ENCODE measurements at regions of chr2 and their contacts with region 1.

Region 1: GRCh38 chr2:228180181-228181097 is 1.0 kb downstream of the SPHKAP start:
- DNase-seq: peak; percentile 38 to 62 (median 48)
- ATAC-seq: peak; percentile 56 to 75 (median 68)
- H3K4me3 ChIP-seq: peak overlapping the region; percentile 40 to 69 (median 60)
- H3K27ac ChIP-seq: peak overlapping the region; percentile 1 to 88 (median 80)
- H3K4me1 ChIP-seq: peaks cover 0 to 5% (median 0%) of the 10 kb centered on the region in 12 donors
- H3K27me3 ChIP-seq: peaks cover 0 to 17% (median 0%) of the 10 kb centered on the region in 9 donors
- CTCF ChIP-seq: peak in 3 of 12 donors; percentile 10 to 23 (median 15)
- POLR2A ChIP-seq: no peak

Region 2: DNA sequence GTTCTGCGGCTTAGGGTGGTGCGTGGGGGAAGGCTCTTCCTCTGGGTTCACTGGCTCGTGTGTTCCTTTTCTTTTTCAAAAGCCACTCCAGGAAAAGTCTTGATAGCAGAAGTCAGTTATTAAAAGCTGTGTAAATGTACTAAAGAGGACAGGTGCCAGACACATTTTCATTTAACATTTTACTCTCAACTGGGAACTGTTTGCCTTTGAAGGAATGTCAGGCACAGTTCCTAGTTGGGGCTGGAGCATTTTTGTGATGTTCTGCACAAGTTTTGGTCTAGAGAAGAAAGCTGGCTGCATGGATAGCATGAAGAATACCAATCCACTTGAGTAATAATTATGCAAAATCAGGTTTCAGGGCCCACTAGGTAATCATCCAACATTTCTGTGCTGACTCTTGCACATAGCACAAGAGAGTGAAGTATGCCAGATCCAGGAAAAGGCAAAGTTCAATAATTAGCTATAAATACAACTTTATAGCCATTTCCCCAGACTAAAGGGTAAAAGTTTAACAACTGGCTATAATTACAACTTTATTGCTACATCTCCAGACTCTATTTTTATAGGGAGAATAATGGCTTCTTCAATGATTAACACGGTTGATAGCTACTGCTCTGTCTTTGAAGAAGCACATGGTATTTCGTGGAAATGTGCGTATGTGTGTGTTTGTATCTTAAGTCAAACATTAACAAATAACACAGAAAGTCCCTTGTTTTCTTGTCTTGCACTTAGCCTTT is 418.5 kb before region 1 on chr2:
- intact Hi-C with region 1: no loop called
- DNase-seq: no peak
- ATAC-seq: no peak
- H3K4me3 ChIP-seq: no peak overlapping the region
- H3K27ac ChIP-seq: no peak overlapping the region
- H3K4me1 ChIP-seq: peaks cover 0 to 10% (median 5%) of the 10 kb centered on the region in 12 donors
- H3K27me3 ChIP-seq: peaks cover 0 to 10% (median 0%) of the 10 kb centered on the region in 9 donors
- CTCF ChIP-seq: no peak
- POLR2A ChIP-seq: no peak

Region 3: DNA sequence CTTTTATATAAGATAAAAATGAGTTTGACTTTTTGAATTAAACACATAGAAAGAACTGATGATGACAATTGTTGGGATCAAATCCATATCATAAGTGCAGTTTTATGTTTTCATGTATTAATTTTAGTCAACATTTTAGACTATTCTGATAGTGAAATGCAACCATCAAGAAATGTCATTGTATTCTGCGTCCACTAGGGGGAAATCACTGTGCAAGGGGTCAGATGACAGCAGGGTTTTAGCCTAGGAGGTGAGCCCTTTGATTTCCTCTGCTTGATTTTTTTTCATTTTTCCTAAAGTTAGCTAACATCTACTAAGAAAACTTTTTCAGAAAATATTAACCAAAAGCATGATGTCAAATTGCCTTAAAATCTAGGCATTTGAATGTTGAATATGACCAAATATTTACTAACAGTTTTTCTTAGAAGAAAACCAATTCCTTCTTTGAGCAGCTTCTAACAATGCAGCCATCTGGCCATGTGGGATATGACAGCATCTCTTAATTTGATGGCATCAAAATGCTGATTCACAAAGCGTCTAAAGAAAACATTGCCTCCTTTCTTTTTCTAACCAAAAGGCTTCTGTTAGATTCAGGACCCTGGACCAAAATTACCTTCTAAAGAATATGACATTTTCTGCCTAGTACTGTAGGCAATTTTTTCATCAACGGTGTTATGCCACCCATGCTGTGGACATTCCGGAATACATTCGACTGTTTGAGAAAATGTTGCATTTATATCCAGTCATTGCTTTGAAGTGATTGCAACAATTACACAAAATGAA is 140.5 kb before region 1 on chr2:
- intact Hi-C with region 1: loop called in 2 of 10 experiments (anchors 5 kb)
- DNase-seq: no peak
- ATAC-seq: no peak
- H3K4me3 ChIP-seq: no peak overlapping the region
- H3K27ac ChIP-seq: no peak overlapping the region
- H3K4me1 ChIP-seq: no peaks in the 10 kb centered on the region
- H3K27me3 ChIP-seq: no peaks in the 10 kb centered on the region
- CTCF ChIP-seq: peak in 11 of 12 donors; percentile 33 to 62 (median 50)
- POLR2A ChIP-seq: no peak

Region 4: GRCh38 chr2:228048838-228049490 is 131.5 kb before region 1 on chr2:
- intact Hi-C with region 1: loop called in 3 of 10 experiments (anchors 5 kb)
- DNase-seq: peak in 2 of 5 donors; percentile 9 to 30
- ATAC-seq: peak; percentile 87 to 96 (median 90)
- H3K4me3 ChIP-seq: no peak overlapping the region
- H3K27ac ChIP-seq: peak overlapping the region in 1 of 12 donors; percentile 14
- H3K4me1 ChIP-seq: peaks cover 0 to 11% (median 0%) of the 10 kb centered on the region in 12 donors
- H3K27me3 ChIP-seq: no peaks in the 10 kb centered on the region
- CTCF ChIP-seq: peak; percentile 19 to 64 (median 48)
- POLR2A ChIP-seq: no peak

Region 5: DNA sequence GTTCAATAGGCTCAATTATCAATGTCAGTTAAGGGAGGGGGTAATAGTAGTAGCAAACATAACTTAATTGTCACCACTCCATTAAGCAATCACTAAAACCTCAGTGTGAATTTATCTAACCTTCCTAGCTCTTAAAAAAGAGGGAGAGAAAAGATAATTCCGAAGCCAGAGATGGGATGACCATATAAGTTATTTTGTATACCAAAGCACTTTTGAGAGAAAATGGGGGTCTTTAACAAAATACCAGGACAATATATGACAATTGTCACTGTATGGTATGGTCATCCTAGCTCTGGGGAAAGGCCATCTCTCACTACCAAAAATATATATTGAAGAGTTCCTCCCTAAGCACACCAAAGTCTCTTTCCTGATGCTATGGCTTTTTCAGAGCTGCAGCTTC is 54.0 kb before region 1 on chr2:
- intact Hi-C with region 1: no loop called
- DNase-seq: no peak
- ATAC-seq: no peak
- H3K4me3 ChIP-seq: no peak overlapping the region
- H3K27ac ChIP-seq: no peak overlapping the region
- H3K4me1 ChIP-seq: peaks cover 0 to 4% (median 0%) of the 10 kb centered on the region in 12 donors
- H3K27me3 ChIP-seq: no peaks in the 10 kb centered on the region
- CTCF ChIP-seq: no peak
- POLR2A ChIP-seq: no peak

Region 6: GRCh38 chr2:228318218-228318617 is 137.8 kb after region 1 on chr2:
- intact Hi-C with region 1: loop called in 1 of 10 experiments (anchors 5 kb)
- DNase-seq: peak in 4 of 5 donors; percentile 16 to 48 (median 32)
- ATAC-seq: peak; percentile 61 to 88 (median 80)
- H3K4me3 ChIP-seq: no peak overlapping the region
- H3K27ac ChIP-seq: peak overlapping the region in 1 of 12 donors; percentile 43
- H3K4me1 ChIP-seq: peaks cover 0 to 19% (median 9%) of the 10 kb centered on the region in 12 donors
- H3K27me3 ChIP-seq: no peaks in the 10 kb centered on the region
- CTCF ChIP-seq: peak; percentile 20 to 58 (median 44)
- POLR2A ChIP-seq: no peak

Region 7: GRCh38 chr2:228329282-228329681 is 148.8 kb after region 1 on chr2:
- intact Hi-C with region 1: loop called in 1 of 10 experiments (anchors 5 kb)
- DNase-seq: peak in 4 of 5 donors; percentile 36 to 57 (median 52)
- ATAC-seq: peak; percentile 91 to 96 (median 94)
- H3K4me3 ChIP-seq: no peak overlapping the region
- H3K27ac ChIP-seq: peak overlapping the region in 9 of 12 donors; percentile 0 to 72 (median 62)
- H3K4me1 ChIP-seq: peaks cover 0 to 11% (median 0%) of the 10 kb centered on the region in 12 donors
- H3K27me3 ChIP-seq: no peaks in the 10 kb centered on the region
- CTCF ChIP-seq: no peak
- POLR2A ChIP-seq: no peak

Region 8: DNA sequence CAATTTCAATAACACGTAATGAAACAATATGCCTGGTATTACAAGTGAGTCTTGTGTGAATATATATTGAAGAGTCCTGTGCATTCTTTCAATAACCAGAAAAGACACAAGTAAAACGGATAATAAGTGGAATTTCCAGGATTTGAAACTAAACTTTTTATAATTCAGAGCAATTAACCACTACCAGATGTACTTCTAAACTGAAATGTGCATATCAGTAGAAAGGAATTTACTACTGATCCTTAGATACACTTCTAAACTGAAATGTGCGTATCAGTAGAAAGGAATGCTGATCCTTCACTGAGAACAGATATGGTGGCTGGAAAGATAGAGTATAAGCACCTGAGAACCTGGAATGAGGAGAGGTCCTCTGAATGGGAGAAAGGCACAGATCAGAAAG is 471.9 kb after region 1 on chr2:
- intact Hi-C with region 1: loop called in 9 of 10 experiments (anchors 2 to 10 kb)
- DNase-seq: no peak
- ATAC-seq: no peak
- H3K4me3 ChIP-seq: no peak overlapping the region
- H3K27ac ChIP-seq: no peak overlapping the region
- H3K4me1 ChIP-seq: peaks cover 0 to 14% (median 0%) of the 10 kb centered on the region in 12 donors
- H3K27me3 ChIP-seq: no peaks in the 10 kb centered on the region
- CTCF ChIP-seq: no peak
- POLR2A ChIP-seq: no peak

Region 9: GRCh38 chr2:228657807-228658402 is 477.5 kb after region 1 on chr2:
- intact Hi-C with region 1: loop called (anchors 2 to 10 kb)
- DNase-seq: no peak
- ATAC-seq: peak in 2 of 4 donors; percentile 62 to 74
- H3K4me3 ChIP-seq: no peak overlapping the region
- H3K27ac ChIP-seq: no peak overlapping the region
- H3K4me1 ChIP-seq: peaks cover 0 to 10% (median 0%) of the 10 kb centered on the region in 12 donors
- H3K27me3 ChIP-seq: no peaks in the 10 kb centered on the region
- CTCF ChIP-seq: peak; percentile 15 to 61 (median 47)
- POLR2A ChIP-seq: no peak

Measured in heart left ventricle (tissue), 16 donors.